ENCODE measurements at regions of chr7 and their contacts with region 1.

Region 1: DNA sequence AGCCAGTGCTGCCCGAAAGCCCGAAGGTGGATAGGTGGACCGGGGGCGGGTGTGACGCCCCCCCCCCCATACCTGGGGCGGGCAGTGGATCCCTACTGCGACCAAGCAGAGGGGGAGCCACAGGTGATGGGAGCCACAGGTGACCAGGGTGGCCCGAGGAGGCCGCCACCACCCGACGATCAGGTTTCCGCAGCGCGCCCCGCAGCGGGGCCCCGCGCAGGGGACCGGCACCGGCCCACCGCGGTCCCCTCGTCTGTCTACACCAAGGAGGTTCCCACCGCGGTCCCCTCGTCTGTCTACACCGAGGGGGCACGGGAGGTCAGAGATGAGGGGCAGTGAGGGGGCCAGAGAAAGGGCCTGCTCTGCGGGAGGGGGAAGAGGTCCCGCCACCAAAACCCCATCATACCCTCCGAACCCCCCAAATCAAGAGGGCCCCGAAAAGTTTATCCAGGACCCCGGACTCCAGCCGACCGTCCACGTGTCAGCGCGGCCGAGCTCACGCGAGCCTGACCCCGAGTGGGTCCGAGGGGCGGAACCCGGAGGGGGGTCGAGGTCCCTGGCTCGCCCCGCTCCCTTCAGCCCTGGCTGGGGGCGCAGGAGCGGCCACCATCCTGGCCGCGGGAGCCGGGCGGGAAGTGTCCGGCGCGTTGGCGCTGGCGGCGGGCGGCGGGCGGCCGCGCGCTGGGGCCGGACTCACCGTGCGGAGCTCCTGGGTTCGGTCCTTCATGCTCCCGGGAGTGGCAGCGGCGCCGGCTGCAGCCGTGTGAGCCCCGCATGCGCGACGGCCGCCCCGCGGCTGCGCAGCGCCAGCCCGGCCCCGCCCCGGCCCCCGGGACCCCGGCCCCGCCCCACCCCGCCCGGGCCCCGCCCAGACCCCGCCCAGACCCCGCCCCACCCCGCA is at the start of gene STX1A:
- DNase-seq: peak; percentile 86 to 99 (median 98)
- ATAC-seq: peak; percentile 86
- H3K4me3 ChIP-seq: peak within 1 kb of the TSS; percentile 75
- H3K27ac ChIP-seq: 0 out of 3 replicates have a peak within 1 kb of the TSS, but pooled peaks have one; percentile 25
- H3K4me1 ChIP-seq: peaks cover 20 to 50% of the 10 kb centered on the region in 2 experiments
- H3K27me3 ChIP-seq: no peaks in the 10 kb centered on the region
- CTCF ChIP-seq: peak in 2 of 3 experiments; percentile 4 to 20; a peak in 1 of 6 replicates
- EP300 ChIP-seq: no peak
- POLR2A ChIP-seq: no peak
- RAD21 ChIP-seq: no peak
- polyA plus RNA-seq, gene STX1A: 0.04 to 0.15 TPM

Region 2: DNA sequence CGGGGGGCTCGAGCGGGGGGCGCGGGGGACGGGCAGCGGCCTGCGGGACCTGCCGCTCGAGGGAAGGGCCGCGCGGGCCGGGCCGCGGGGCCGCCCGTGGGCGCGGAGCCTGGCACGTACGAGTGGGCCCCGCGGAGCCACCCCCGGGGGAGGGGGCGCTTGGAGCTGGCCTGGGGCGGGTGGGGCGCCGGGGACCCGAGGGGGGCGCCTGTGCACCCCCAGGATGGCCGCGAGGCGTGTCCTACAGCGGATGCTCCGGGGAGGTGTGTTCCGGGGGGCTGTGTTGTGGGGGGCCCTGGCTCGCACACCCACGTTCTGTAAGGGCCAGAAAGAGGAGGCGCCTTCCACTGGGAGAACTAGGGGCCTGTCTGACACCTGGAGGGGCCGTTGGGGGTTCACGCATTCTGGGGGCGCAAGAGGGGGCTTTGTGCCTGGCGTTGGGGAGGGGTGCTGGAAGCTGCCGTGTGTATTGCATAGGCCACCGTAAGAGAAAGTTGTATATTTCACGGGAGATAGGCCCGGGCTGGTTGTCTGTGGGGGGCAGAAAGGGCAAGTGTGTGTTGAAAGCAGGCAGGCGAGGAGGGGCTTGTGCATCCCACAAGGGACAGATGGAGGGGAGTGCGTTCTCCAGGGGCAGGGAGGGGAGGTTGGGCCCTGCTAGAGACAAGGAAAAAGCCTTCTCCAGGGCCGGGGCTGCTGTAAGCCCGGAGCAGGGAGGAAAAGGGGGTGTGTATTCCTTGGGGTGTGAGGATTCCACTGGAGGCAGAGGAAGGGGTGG is 50.9 kb before region 1 on chr7:
- CTCF ChIA-PET with region 1: no interaction called
- POLR2A ChIA-PET with region 1: no interaction called
- in situ Hi-C with region 1: no loop called
- intact Hi-C with region 1: no loop called
- DNase-seq: peak in 2 of 4 experiments; percentile 66 to 71
- ATAC-seq: no peak
- H3K4me3 ChIP-seq: peak overlapping the region; percentile 53
- H3K27ac ChIP-seq: no peak overlapping the region
- H3K4me1 ChIP-seq: peaks cover 9 to 42% of the 10 kb centered on the region in 2 experiments
- H3K27me3 ChIP-seq: no peaks in the 10 kb centered on the region
- CTCF ChIP-seq: no peak
- EP300 ChIP-seq: no peak
- POLR2A ChIP-seq: no peak
- RAD21 ChIP-seq: no peak

Region 3: DNA sequence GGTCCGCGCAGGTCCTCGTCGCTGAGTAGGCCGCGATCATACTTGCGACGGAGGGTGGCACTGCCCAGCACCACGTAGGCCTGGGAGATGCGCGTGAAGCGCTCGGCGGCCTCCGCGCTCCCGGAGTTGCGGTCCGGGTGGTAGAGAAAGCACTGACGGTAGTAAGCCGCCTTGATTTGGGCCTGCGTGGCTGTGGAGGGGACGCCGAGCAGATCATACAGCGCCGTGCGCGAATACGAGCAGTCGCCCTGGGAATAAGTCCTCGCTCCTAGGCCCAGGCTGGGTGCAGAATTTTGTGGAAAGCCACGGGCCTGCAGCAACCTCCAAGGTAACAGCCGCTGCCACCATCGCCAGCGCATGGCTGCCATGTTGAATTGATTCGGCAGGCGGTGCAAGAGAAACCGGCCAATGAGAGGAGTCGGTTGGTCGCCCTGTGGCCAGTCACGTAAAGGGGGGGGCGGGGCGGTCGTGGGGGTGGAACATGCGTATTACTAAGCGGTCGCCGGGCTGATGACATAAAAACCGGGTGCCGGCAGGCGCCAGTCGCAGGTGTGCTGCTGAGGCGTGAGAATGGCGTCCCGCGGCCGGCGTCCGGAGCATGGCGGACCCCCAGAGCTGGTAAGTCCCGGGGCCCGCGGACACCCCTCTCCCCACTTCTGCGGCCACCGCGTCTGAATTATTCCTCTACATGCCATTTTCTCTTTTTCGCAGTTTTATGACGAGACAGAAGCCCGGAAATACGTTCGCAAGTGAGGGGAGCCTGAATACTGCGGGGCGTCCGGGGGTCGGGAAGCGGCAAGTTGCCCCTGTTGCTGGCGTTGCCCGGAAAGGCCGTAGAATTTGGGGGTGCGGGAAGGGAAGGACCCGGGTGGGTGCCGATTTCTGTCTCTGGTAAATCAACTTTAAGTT is 35.8 kb before region 1 on chr7 and contains the starts of genes BUD23 and DNAJC30:
- CTCF ChIA-PET with region 1: no interaction called
- POLR2A ChIA-PET with region 1: no interaction called
- in situ Hi-C with region 1: no loop called
- intact Hi-C with region 1: loop called (anchors 5 kb)
- DNase-seq: peak; percentile 98 to 99 (median 99)
- ATAC-seq: peak; percentile 94
- H3K4me3 ChIP-seq: peak within 1 kb of the TSS; percentile 99
- H3K27ac ChIP-seq: peak within 1 kb of the TSS; percentile 90
- H3K4me1 ChIP-seq: peaks cover 35 to 45% of the 10 kb centered on the region in 2 experiments; a peak in 4 of 5 replicates
- H3K27me3 ChIP-seq: no peaks in the 10 kb centered on the region
- CTCF ChIP-seq: no peak; a peak in 1 of 6 replicates
- EP300 ChIP-seq: no peak
- POLR2A ChIP-seq: peak; percentile 97
- RAD21 ChIP-seq: 0 out of 4 replicates have a peak, but pooled peaks of 1 of the 2 experiments have one; percentile 10
- polyA plus RNA-seq, gene BUD23: 79.5 to 150 TPM
- polyA plus RNA-seq, gene DNAJC30: 1.1 to 1.4 TPM

Region 4: DNA sequence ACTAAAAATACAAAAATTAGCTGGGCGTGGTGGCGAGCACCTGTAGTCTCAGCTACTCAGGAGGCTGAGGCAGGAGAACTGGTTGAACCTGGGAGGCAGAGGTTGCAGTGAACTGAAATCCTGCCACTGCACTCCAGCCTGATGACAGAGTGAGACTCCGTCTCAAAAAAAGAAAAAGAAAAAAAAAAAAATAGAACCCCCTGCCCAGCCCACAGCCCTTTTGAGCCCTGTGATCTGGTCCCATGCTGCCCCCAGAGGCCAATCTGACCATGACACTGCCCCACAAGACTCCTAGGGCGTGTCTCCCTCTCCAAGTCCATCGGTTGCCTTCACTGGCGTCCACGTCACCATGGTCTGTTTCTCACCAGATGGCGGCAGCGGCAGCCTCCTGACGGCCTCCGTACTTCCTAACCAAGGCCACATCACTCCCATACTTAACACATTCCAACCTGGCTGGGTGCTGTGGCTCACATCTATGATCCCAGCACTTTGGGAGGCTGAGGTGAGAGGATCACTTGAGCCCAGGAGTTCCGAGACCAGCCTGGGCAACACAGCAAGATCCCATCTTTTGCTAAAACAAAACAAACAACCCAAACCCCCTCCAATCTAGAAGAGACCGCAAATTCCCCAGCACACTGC is 17.7 kb before region 1 on chr7:
- CTCF ChIA-PET with region 1: no interaction called
- POLR2A ChIA-PET with region 1: interaction called, 16 read pairs
- in situ Hi-C with region 1: no loop called
- intact Hi-C with region 1: no loop called
- DNase-seq: peak; percentile 77 to 85 (median 81)
- ATAC-seq: peak; percentile 82
- H3K4me3 ChIP-seq: no peak overlapping the region
- H3K27ac ChIP-seq: no peak overlapping the region
- H3K4me1 ChIP-seq: peaks cover 15 to 60% of the 10 kb centered on the region in 2 experiments; a peak in 4 of 5 replicates
- H3K27me3 ChIP-seq: no peaks in the 10 kb centered on the region; a peak in 1 of 5 replicates
- CTCF ChIP-seq: peak; percentile 83 to 94 (median 85)
- EP300 ChIP-seq: no peak
- POLR2A ChIP-seq: no peak
- RAD21 ChIP-seq: peak; percentile 22 to 49; a peak in 3 of 4 replicates